Dorsolateral prefrontal cortex (tissue), 120 donors: ENCODE measurements at regions of chr16 and their contacts with region 1.

Region 1: GRCh38 chr16:8797364-8798173 is at the starts of genes PMM2 and TMEM186:
- DNase-seq: peak; percentile 97 to 99 (median 98)
- H3K4me3 ChIP-seq: peak within 1 kb of the TSS; percentile 68 to 100 (median 99)
- H3K27ac ChIP-seq: peak within 1 kb of the TSS in 53 of 59 donors; percentile 14 to 87 (median 70)
- H3K27me3 ChIP-seq: no peaks in the 10 kb centered on the region
- CTCF ChIP-seq: peak in 31 of 56 donors; percentile 9 to 62 (median 32)
- total RNA-seq, gene PMM2: 9.1 to 27.1 (median 15.3) TPM
- total RNA-seq, gene TMEM186: 6.9 to 15.1 (median 10.2) TPM

Region 2: DNA sequence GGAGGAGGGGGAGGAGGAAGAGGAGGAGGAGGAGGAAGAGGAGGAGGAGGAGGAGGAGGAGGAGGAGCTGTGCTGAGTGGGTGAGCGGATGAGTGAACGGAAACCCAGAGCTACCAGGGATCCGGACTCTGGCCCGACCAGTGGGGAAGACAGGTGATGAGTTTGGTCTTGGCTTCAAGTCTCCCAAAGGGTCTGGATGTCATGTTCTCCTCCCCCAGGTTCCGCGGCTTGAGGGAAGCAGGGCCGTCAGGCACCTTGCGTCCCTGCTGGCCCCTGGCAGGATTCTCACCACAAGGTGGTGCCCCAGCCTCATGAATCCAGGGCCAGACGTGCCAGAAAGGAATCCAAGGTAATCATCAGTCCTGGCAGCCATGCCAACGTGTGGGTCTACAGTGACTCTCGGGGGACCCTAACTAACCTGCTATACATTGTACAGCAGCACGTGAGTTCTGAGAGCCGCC is 136.7 kb before region 1 on chr16:
- intact Hi-C with region 1: loop called in 1 of 2 experiments (anchors 2 kb)
- DNase-seq: peak in 9 of 10 donors; percentile 45 to 82 (median 67)
- H3K4me3 ChIP-seq: peak overlapping the region in 2 of 59 donors; percentile 9 to 39
- H3K27ac ChIP-seq: no peak overlapping the region
- H3K27me3 ChIP-seq: no peaks in the 10 kb centered on the region
- CTCF ChIP-seq: peak; percentile 41 to 87 (median 68)

Region 3: GRCh38 chr16:8720080-8720966 is 77.2 kb before region 1 on chr16:
- intact Hi-C with region 1: no loop called
- DNase-seq: peak in 5 of 10 donors; percentile 33 to 51 (median 48)
- H3K4me3 ChIP-seq: peak overlapping the region in 13 of 59 donors; percentile 1 to 38 (median 16)
- H3K27ac ChIP-seq: peak overlapping the region in 13 of 59 donors; percentile 1 to 55 (median 28)
- H3K27me3 ChIP-seq: no peaks in the 10 kb centered on the region
- CTCF ChIP-seq: no peak

Region 4: GRCh38 chr16:8868416-8869211 is 71.0 kb after region 1 on chr16 and contains the start of gene CARHSP1:
- intact Hi-C with region 1: loop called (anchors 2 to 5 kb)
- DNase-seq: peak; percentile 51 to 85 (median 70)
- H3K4me3 ChIP-seq: peak within 1 kb of the TSS; percentile 55 to 94 (median 77)
- H3K27ac ChIP-seq: peak within 1 kb of the TSS; percentile 66 to 98 (median 92)
- H3K27me3 ChIP-seq: no peaks in the 10 kb centered on the region
- CTCF ChIP-seq: peak in 3 of 56 donors; percentile 8 to 30 (median 17)
- total RNA-seq, gene CARHSP1: 19.2 to 95.1 (median 46.3) TPM

Region 5: GRCh38 chr16:9012848-9013507 is 215.4 kb after region 1 on chr16:
- intact Hi-C with region 1: loop called in 1 of 2 experiments (anchors 5 kb)
- DNase-seq: peak in 5 of 10 donors; percentile 46 to 73 (median 58)
- H3K4me3 ChIP-seq: no peak overlapping the region
- H3K27ac ChIP-seq: peak overlapping the region in 1 of 59 donors; percentile 15
- H3K27me3 ChIP-seq: peaks cover 0 to 34% (median 0%) of the 10 kb centered on the region in 45 donors
- CTCF ChIP-seq: peak in 8 of 56 donors; percentile 9 to 22 (median 16)